ENCODE measurements at regions of chr13 and their contacts with region 1.

Region 1: GRCh38 chr13:41546372-41547190 is 89.2 kb downstream of the RGCC start:
- DNase-seq: peak in 3 of 42 donors; percentile 12 to 61 (median 33)

Region 2: DNA sequence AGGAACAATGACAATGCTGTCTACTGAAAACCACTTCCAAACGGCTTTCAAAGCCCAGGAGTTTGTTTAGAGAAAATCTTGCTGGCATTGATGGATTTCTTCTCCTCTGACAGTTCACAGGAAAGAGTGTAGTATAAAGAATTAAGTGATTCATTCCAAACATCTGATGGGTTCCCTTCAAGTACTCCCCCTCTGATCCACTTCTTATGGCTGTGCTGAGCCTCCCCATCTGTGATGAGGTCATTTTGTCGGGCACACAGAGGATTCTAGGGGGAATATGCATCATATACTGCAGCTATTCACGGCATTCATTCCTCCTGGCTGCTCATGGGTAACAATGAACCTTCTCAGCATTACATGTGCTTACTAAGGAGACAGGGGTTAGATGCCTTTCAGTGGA is 18.6 kb after region 1 on chr13:
- intact Hi-C with region 1: loop called (anchors 1 kb)
- DNase-seq: peak in 21 of 42 donors; percentile 29 to 79 (median 55)

Region 3: GRCh38 chr13:41639955-41640780 is 93.6 kb after region 1 on chr13:
- intact Hi-C with region 1: loop called (anchors 10 kb)
- DNase-seq: no peak

Measured in head of caudate nucleus (tissue), 42 donors.